OCI-LY7 (cell line): ENCODE measurements at regions of chr15 and their contacts with region 1.

Region 1: GRCh38 chr15:46409841-46410301 is 775.0 kb downstream of the SQOR start:
- DNase-seq: no peak
- H3K4me3 ChIP-seq: no peak overlapping the region
- H3K27ac ChIP-seq: no peak overlapping the region
- H3K4me1 ChIP-seq: no peaks in the 10 kb centered on the region
- CTCF ChIP-seq: no peak

Region 2: DNA sequence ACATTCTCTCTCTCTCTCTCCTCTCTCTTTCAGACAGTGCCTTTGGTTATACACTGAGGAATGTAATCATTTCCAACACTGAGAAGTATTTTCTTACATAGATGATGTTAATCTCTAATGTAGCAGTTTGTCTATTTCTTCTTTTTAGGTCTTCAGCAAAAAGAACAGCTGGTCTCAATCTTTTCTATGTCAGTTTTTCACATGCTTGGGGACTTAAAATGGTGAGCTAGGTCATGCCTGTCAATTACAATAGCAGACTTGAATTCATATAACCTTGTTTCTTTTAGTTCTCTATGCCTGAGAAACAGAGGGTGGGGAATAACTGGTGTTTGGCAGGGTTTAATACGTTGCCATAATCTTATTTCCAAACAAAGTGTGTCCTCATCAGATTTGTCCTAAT is 11.1 kb after region 1 on chr15:
- CTCF ChIA-PET with region 1: no interaction called
- POLR2A ChIA-PET with region 1: no interaction called
- intact Hi-C with region 1: loop called (anchors 1 kb)
- DNase-seq: no peak
- H3K4me3 ChIP-seq: no peak overlapping the region
- H3K27ac ChIP-seq: no peak overlapping the region
- H3K4me1 ChIP-seq: no peaks in the 10 kb centered on the region
- CTCF ChIP-seq: no peak